SK-N-SH (cell line): ENCODE measurements at regions of chr12 and their contacts with region 1.

Region 1: GRCh38 chr12:108664338-108665258 is 30.9 kb upstream of the SELPLG start:
- DNase-seq: peak; percentile 78
- H3K4me3 ChIP-seq: no peak overlapping the region; a peak in 1 of 4 replicates
- H3K27ac ChIP-seq: peak overlapping the region; percentile 84 to 91
- H3K4me1 ChIP-seq: peaks cover 46 to 61% of the 10 kb centered on the region in 2 experiments
- H3K27me3 ChIP-seq: no peaks in the 10 kb centered on the region
- CTCF ChIP-seq: peak; percentile 93
- EP300 ChIP-seq: peak in 1 of 2 experiments; percentile 18; a peak in 1 of 4 replicates
- RAD21 ChIP-seq: peak; percentile 100

Region 2: GRCh38 chr12:108643941-108644810 is 20.4 kb before region 1 on chr12:
- CTCF ChIA-PET with region 1: interaction called, 19 read pairs
- POLR2A ChIA-PET with region 1: no interaction called
- DNase-seq: no peak
- H3K4me3 ChIP-seq: peak overlapping the region in 1 of 2 experiments; percentile 10; a peak in 1 of 4 replicates
- H3K27ac ChIP-seq: peak overlapping the region; percentile 55 to 79
- H3K4me1 ChIP-seq: peaks cover 15 to 64% of the 10 kb centered on the region in 2 experiments; a peak in 3 of 4 replicates
- H3K27me3 ChIP-seq: no peaks in the 10 kb centered on the region
- CTCF ChIP-seq: no peak
- EP300 ChIP-seq: peak in 1 of 2 experiments; percentile 61; a peak in 1 of 4 replicates
- RAD21 ChIP-seq: no peak

Region 3: GRCh38 chr12:108691175-108691997 is 26.8 kb after region 1 on chr12:
- CTCF ChIA-PET with region 1: interaction called, 52 read pairs
- POLR2A ChIA-PET with region 1: no interaction called
- DNase-seq: peak; percentile 77
- H3K4me3 ChIP-seq: peak overlapping the region; percentile 28 to 53
- H3K27ac ChIP-seq: peak overlapping the region; percentile 97 to 99
- H3K4me1 ChIP-seq: peaks cover 43 to 67% of the 10 kb centered on the region in 2 experiments
- H3K27me3 ChIP-seq: no peaks in the 10 kb centered on the region
- CTCF ChIP-seq: peak; percentile 36; the same call in 1 of the 2 replicates
- EP300 ChIP-seq: peak; percentile 77 to 92; a peak in 3 of 4 replicates
- RAD21 ChIP-seq: no peak; the same call in 1 of the 2 replicates

Region 4: DNA sequence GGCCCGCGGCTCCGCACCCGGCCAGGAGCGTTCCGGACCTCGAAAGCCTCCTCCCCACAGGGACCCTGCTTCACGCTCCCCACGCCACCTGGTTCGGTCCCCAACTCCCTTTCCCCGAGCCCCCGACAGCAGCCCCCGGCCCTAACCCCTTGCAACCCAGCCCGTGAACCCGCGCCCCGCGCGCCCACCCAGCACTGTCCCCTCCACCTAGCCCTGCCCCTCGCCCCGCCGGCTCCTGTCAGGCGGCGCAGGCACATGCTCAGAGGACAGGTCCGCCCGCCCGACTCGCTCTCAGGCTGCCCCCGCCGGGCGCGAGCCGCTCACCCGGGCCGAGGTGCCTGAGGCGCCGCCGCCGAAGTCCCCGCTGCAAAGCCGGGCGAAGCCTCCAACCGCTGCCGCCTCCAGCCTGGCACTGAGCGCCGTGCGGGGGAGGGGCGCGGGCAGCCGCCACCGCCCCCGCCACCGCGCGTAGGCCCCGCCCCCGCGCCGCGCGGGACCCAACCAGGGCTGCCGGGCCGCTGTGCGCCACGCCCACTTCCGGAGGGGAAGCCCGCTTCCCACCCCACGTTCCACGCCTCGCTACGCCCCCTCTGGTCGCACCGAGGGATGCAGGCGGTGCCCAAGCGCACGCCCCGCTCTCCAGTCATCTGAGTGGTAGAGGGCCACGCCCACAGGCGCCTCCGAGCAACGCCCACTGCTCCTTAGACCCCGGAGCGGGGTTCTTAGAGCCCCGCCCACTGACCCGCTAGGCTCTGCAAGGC is 66.7 kb after region 1 on chr12 and contains the start of gene CORO1C:
- CTCF ChIA-PET with region 1: interaction called, 18 read pairs
- POLR2A ChIA-PET with region 1: interaction called, 6 read pairs
- DNase-seq: peak; percentile 97
- H3K4me3 ChIP-seq: peak within 1 kb of the TSS; percentile 80 to 90
- H3K27ac ChIP-seq: peak within 1 kb of the TSS; percentile 92 to 96
- H3K4me1 ChIP-seq: peaks cover 13 to 23% of the 10 kb centered on the region in 2 experiments; a peak in 3 of 4 replicates
- H3K27me3 ChIP-seq: no peaks in the 10 kb centered on the region
- CTCF ChIP-seq: peak; percentile 73
- EP300 ChIP-seq: peak in 1 of 2 experiments; percentile 41; a peak in 1 of 4 replicates
- RAD21 ChIP-seq: peak; percentile 60
- polyA plus RNA-seq, gene CORO1C: 150 and 214 TPM in 2 replicates

Region 5: DNA sequence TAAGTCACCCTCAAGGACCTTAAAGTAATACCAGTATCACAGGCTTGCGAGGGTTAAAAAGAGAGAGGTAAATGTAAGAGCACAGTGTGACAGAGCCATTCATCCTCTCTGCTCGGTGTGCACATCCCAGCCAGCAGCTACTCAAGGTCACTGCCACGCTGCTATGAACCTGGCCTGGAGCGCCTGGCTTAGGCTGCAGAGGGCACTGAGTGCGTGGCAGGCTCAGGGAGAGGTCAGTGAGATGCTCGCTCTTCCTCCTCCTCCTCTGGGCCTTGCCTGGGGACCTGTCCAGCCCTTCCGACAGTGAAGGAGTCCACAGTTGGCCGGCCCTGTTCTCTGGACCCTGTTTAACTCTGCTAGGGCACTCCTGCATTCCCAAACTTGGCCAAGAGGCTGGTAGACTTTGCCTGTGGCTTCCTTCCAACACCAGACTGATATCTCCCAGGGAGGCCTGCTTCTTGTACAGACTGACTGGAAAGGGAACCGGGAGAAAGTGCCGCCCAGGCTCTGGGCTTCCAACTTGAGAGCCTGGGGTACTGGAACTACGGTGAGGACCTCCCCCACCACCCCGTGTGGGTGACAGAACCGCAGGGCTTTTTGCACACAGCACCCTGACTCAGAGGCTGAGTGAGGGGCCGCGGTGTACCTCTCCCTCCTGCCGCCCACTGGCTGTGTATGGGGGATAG is 129.3 kb after region 1 on chr12:
- CTCF ChIA-PET with region 1: interaction called, 327 read pairs
- POLR2A ChIA-PET with region 1: no interaction called
- DNase-seq: no peak
- H3K4me3 ChIP-seq: no peak overlapping the region
- H3K27ac ChIP-seq: no peak overlapping the region
- H3K4me1 ChIP-seq: no peaks in the 10 kb centered on the region
- H3K27me3 ChIP-seq: no peaks in the 10 kb centered on the region
- CTCF ChIP-seq: no peak
- EP300 ChIP-seq: no peak
- RAD21 ChIP-seq: no peak

Region 6: GRCh38 chr12:109093022-109093918 is 428.7 kb after region 1 on chr12 and contains the start of gene ALKBH2:
- CTCF ChIA-PET with region 1: interaction called, 17 read pairs
- POLR2A ChIA-PET with region 1: no interaction called
- DNase-seq: peak; percentile 90
- H3K4me3 ChIP-seq: peak within 1 kb of the TSS; percentile 60 to 77
- H3K27ac ChIP-seq: peak within 1 kb of the TSS; percentile 54 to 60; a peak in 3 of 4 replicates
- H3K4me1 ChIP-seq: peaks cover 0 to 22% of the 10 kb centered on the region in 2 experiments; a peak in 1 of 4 replicates
- H3K27me3 ChIP-seq: no peaks in the 10 kb centered on the region
- CTCF ChIP-seq: peak; percentile 91
- EP300 ChIP-seq: peak in 1 of 2 experiments; percentile 58; a peak in 2 of 4 replicates
- RAD21 ChIP-seq: peak; percentile 90
- polyA plus RNA-seq, gene ALKBH2: 47.3 and 53.7 TPM in 2 replicates